Colonic mucosa (tissue), 4 donors: ENCODE measurements at regions of chr7 and their contacts with region 1.

Region 1: DNA sequence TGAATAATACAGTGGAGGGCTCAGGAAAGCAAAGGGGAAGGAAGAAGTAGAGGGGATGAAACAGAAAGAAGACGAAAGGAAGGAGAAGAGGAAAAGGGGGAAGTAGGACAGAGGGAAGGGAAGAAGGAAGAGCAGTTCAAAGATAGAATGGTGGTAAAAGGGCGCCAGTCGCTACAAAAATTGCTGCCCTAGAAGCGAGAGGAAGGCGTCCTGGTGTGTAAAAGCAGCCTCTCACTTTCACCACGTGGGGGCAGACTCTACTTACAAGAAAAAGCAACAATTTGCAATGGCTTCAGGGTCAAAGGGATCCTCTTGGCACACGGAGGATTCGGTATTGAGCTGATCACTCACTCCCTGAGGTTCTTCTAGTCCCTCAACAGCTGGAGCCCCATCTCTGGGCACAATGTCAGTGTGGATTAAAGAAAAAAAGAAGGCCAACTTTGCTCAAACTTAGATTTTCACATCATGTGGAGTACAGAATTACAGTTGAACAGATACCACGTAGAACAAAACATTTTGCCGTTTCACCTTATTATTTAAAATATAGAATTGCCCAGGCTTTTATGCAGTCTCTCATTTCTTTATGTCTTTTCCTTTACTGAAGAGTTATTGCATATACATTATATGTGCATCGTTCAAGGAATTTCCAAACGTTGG is 31.4 kb upstream of the NPVF start:
- DNase-seq: peak; percentile 82
- H3K4me3 ChIP-seq: no peak overlapping the region
- H3K27ac ChIP-seq: no peak overlapping the region
- H3K4me1 ChIP-seq: peaks cover 9% of the 10 kb centered on the region
- H3K27me3 ChIP-seq: no peaks in the 10 kb centered on the region
- CTCF ChIP-seq: peak; percentile 86

Region 2: DNA sequence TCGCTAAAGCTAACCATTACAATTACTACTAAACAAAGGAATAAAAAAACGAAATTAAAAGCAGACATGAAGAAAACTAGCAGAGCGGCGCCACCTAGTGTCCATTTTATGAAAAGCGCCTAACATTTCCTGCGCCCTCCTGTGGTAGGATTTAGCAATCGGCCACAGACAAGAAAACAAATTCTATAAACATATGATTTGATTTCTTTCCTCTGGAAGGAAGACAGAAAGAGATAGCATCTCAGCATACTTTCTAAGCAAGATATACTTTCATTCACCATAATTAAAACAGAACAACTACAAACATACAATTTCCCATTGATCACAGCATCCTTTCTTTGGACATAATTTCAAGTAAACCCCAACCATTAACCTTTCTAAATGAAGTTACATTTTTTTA is 306.2 kb after region 1 on chr7:
- intact Hi-C with region 1: loop called (anchors 2 kb)
- DNase-seq: peak; percentile 69
- H3K4me3 ChIP-seq: no peak overlapping the region
- H3K27ac ChIP-seq: no peak overlapping the region
- H3K4me1 ChIP-seq: no peaks in the 10 kb centered on the region
- H3K27me3 ChIP-seq: no peaks in the 10 kb centered on the region
- CTCF ChIP-seq: peak; percentile 100